Left colon (tissue), 2 donors: ENCODE measurements at regions of chr1 and their contacts with region 1.

Region 1: GRCh38 chr1:76035053-76035452 is 39.5 kb upstream of the ST6GALNAC3 start:
- DNase-seq: no peak
- ATAC-seq: no peak

Region 2: GRCh38 chr1:76140227-76140626 is 105.2 kb after region 1 on chr1:
- intact Hi-C with region 1: loop called in 1 of 2 experiments (anchors 10 kb)
- DNase-seq: peak in 1 of 2 donors; percentile 23
- ATAC-seq: peak; percentile 81